ENCODE measurements at regions of chr5 and their contacts with region 1.

Region 1: DNA sequence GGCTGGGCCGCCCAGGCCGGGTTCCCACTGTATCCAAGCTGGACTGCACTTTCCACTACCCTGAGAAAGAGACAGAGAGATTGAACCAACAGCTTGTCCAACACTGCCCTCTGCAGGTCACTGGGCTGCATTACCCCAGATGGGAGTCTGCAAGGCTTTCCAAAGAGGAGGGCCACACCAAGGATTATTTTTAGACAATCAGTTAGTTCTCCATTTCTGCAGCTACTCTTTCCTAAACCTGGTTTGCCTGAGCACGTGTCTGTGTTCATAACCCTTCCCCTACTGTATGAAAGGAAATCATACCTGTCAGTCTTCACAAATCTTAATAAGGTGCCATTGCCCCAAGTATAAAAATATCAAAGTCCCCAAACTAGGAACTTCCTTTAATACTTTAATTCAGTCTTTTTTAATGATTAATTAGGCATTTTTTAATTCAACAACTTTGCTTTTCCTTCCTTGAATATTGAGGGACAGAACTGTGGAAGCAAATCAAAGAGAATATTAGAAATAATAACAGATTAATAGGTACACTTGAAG is 13.4 kb upstream of the FGF1 start:
- DNase-seq: peak; percentile 60
- H3K4me3 Mint-ChIP-seq: no peak overlapping the region
- H3K27ac Mint-ChIP-seq: no peak overlapping the region
- H3K4me1 Mint-ChIP-seq: peaks cover 3% of the 10 kb centered on the region
- H3K27me3 Mint-ChIP-seq: peaks cover 14% of the 10 kb centered on the region

Region 2: DNA sequence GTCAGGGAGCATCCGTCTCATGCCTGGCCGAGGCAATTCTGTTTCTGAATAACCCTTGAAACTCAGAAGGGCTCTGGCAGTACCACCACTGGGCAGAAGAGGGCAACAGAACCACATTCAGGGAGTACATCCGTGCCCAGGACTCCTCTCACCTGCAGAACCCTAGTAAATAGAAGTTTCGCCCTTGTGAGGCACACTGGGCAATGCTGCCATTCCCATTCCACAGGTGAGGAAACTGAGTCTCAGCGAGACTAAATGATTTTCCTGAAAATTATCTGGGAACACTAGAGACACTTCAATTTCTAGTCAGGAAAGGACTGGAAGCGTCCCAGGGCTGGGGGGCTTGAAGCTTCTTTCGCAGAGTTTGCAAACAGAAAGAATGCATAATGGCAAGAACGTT is 88.1 kb before region 1 on chr5:
- intact Hi-C with region 1: loop called (anchors 1 kb)
- DNase-seq: peak; percentile 42
- H3K4me3 Mint-ChIP-seq: no peak overlapping the region
- H3K27ac Mint-ChIP-seq: no peak overlapping the region
- H3K4me1 Mint-ChIP-seq: no peaks in the 10 kb centered on the region
- H3K27me3 Mint-ChIP-seq: peaks cover 24% of the 10 kb centered on the region

Region 3: DNA sequence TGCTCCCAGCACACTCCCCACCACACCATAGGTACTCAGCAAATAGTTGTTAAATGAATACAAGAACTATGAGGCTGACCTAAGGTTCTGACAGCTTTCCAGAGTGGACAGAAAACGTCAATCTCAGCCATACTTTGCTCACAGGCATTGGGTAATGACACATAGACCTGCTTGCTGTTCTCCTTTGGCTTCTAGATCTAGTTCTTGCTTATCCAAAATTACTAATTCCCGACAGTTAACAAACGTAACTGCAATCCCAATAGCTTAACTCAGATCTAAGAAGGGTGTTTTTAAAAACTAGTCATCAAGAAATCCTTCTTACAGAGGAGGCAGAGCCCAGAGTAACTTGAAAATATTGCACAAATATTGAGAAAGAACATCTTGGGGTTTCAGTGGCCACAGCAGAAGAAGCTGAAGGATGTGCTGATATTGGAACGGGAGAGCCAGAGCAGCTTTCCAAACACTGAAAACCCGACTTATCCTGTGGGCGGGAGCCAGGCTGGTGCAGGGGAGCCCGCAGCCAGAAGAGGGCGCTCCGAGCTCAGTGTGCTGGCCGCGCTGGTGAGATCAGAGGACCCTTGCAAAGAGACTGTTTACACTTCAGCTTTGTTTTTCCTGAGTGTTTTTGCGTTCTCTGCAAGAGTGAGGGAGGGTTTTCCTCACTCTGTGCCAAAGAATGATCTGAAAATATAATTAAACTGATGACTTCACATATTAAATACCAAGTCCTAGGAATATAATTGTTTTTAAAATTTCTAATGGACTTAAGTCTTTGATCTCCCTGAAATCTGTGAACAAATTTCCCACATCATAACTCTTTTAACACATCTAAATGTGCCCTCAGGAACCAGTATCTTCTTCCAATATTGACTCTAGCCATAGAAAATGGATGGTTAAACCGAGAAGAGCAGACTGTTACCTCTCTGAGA is 43.6 kb before region 1 on chr5:
- intact Hi-C with region 1: loop called (anchors 1 kb)
- DNase-seq: peak; percentile 50
- H3K4me3 Mint-ChIP-seq: no peak overlapping the region
- H3K27ac Mint-ChIP-seq: no peak overlapping the region
- H3K4me1 Mint-ChIP-seq: peaks cover 2% of the 10 kb centered on the region
- H3K27me3 Mint-ChIP-seq: peaks cover 23% of the 10 kb centered on the region

Measured in activated T-helper 2 cell treated with anti-CD3 and anti-CD28 coated beads, Interferon-gamma antibody, Interleukin-2, Interleukin-4, amounts not matched to agents 10 μg/mL and 5 μg/mL and 100 μg/mL, durations not matched to agents 14 hours and 24 hours and 36 hours (primary cell).